HCT116 (cell line): ENCODE measurements at regions of chr19 and their contacts with region 1.

Region 1: DNA sequence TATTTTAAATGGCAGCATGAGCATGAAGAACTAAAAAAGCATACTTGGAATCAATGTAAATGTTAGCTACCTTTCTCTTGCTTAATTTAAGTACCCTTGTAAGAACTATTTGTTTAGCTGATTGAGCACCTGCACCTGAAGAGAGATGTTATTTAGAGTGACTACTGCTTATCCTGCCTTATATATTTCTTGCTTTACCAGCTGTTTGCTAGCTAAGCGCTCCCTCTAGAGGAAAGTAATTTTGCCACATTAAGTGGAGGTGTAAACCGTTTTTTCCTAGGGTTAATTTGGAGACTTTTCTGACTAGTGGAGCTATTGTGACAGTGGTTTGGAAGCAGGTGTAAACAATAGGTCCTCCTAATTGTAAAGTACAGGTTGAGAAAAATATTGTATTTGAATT is 19.4 kb upstream of the PSG2 start:
- DNase-seq: no peak
- ATAC-seq: peak; percentile 66
- H3K4me3 ChIP-seq: no peak overlapping the region
- H3K27ac ChIP-seq: no peak overlapping the region
- H3K4me1 ChIP-seq: no peaks in the 10 kb centered on the region
- H3K27me3 ChIP-seq: no peaks in the 10 kb centered on the region
- CTCF ChIP-seq: peak; percentile 36 to 62 (median 42); a peak in 5 of 6 replicates
- POLR2A ChIP-seq: no peak
- RAD21 ChIP-seq: peak; percentile 43

Region 2: GRCh38 chr19:43191191-43191590 is 89.2 kb after region 1 on chr19:
- CTCF ChIA-PET with region 1: interaction called, 9 read pairs
- POLR2A ChIA-PET with region 1: no interaction called
- RAD21 ChIA-PET with region 1: no interaction called
- intact Hi-C with region 1: loop called (anchors 5 kb)
- DNase-seq: no peak
- ATAC-seq: no peak
- H3K4me3 ChIP-seq: no peak overlapping the region
- H3K27ac ChIP-seq: no peak overlapping the region
- H3K4me1 ChIP-seq: no peaks in the 10 kb centered on the region
- H3K27me3 ChIP-seq: no peaks in the 10 kb centered on the region
- CTCF ChIP-seq: no peak
- POLR2A ChIP-seq: no peak
- RAD21 ChIP-seq: no peak

Region 3: GRCh38 chr19:43207991-43208390 is 106.0 kb after region 1 on chr19:
- CTCF ChIA-PET with region 1: interaction called, 7 read pairs
- POLR2A ChIA-PET with region 1: no interaction called
- RAD21 ChIA-PET with region 1: interaction called in 1 of 2 experiments, 3 read pairs
- intact Hi-C with region 1: loop called (anchors 5 kb)
- DNase-seq: no peak
- ATAC-seq: no peak
- H3K4me3 ChIP-seq: no peak overlapping the region
- H3K27ac ChIP-seq: no peak overlapping the region
- H3K4me1 ChIP-seq: no peaks in the 10 kb centered on the region
- H3K27me3 ChIP-seq: no peaks in the 10 kb centered on the region
- CTCF ChIP-seq: no peak
- POLR2A ChIP-seq: no peak
- RAD21 ChIP-seq: no peak